Gastrocnemius medialis (tissue), 4 donors: ENCODE measurements at regions of chr20 and their contacts with region 1.

Region 1: DNA sequence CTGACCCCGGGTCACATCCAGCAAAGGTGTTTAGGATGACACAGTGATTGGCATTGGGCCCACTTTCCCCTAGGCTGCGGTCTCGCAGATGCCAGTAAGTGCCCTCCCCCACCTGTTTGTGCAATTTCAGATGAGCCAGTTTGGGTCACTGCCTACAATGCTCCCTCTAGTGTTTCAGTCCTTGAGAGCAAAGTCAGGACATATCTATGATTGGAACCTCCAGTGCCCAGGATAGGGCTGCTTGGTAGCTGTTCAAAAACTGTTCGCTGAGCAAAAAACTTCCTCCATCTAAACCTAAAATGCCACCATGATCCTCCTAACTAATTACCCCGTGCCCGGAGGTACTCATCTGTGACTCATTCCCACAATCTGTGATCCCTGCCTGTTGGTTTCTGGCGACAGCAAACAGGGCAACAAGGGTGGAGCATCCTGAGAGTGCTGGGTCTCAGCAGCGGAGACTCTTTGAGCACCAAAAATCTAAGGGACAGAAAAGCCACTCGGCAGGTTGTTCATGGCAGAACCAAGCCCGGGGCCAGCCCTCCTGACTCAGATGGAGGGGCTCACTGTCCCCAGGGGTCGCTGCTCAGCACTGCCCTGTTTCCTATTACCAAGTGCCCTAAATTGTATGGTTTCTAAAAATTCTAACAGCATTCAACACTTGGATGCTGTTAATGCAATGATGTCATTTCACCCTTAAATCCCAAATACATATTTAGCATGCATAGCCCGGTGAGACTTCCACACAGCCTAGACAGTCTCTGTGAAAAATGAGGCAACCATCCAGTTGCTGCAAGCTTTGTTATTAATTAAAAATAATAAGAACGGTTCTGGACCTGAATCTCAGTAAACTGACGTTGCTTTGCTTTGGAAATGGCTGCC is 5.0 kb downstream of the VSX1 start:
- DNase-seq: peak in 1 of 2 donors; percentile 57
- ATAC-seq: peak; percentile 76 to 77
- H3K4me3 ChIP-seq: peak overlapping the region; percentile 41 to 52 (median 48)
- H3K27ac ChIP-seq: peak overlapping the region; percentile 56 to 70 (median 62)
- H3K4me1 ChIP-seq: peaks cover 16 to 19% of the 10 kb centered on the region in 2 donors
- H3K27me3 ChIP-seq: peaks cover 13 to 25% (median 23%) of the 10 kb centered on the region in 3 donors
- CTCF ChIP-seq: peak in 3 of 5 experiments; percentile 16 to 44 (median 22)
- POLR2A ChIP-seq: no peak

Region 2: GRCh38 chr20:25005220-25005619 is 71.8 kb before region 1 on chr20:
- in situ Hi-C with region 1: no loop called
- intact Hi-C with region 1: no loop called
- DNase-seq: no peak
- ATAC-seq: no peak
- H3K4me3 ChIP-seq: no peak overlapping the region
- H3K27ac ChIP-seq: no peak overlapping the region
- H3K4me1 ChIP-seq: peaks cover 5 to 12% of the 10 kb centered on the region in 2 donors
- H3K27me3 ChIP-seq: no peaks in the 10 kb centered on the region
- CTCF ChIP-seq: no peak
- POLR2A ChIP-seq: no peak

Region 3: DNA sequence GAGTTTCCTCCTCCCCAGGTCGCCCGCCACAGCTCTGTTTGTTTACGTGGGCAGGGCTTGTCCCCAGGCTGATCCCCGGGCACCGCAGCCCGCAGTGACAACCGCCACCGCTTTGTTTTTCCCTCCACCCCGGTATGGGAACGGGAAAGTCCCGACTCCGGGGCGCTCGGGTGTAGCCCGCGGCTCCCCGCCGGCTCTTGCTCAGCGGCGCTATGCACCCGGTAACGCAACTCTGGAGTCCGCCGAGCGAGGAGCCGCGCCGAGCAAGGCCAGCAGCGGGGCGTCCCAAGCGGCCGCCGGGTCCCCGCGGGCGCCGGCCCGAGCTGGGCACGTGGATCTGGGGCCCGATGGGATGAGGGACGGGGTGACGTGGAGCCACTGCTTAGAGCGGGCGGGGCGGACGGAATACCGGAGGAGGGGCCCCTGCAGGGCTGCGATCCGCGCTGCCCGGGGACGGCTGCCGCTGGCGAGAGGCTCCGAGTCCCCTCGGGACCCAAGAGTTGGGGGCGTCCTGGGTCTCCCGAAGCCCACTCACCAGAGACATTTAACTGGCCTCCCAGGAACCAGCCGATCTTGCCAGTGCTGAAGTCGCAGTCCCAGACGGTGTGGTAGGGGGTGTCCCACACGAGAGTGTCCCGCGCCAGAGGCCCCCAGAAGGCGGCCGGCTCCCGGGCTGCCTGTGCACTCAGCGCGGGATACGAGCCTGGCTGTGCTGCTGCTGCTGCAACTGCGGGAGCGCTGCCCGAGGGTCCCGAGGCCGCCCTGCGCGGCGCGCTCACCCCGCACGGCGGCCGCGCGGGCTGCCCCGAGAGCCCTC is 19.5 kb before region 1 on chr20:
- in situ Hi-C with region 1: no loop called
- intact Hi-C with region 1: no loop called
- DNase-seq: peak; percentile 67 to 74
- ATAC-seq: peak; percentile 65 to 70
- H3K4me3 ChIP-seq: peak overlapping the region; percentile 72 to 93 (median 80)
- H3K27ac ChIP-seq: peak overlapping the region; percentile 87 to 95 (median 94)
- H3K4me1 ChIP-seq: peaks cover 44 to 55% of the 10 kb centered on the region in 2 donors
- H3K27me3 ChIP-seq: no peaks in the 10 kb centered on the region
- CTCF ChIP-seq: peak in 1 of 5 experiments; percentile 5
- POLR2A ChIP-seq: peak; percentile 89 to 92

Region 4: DNA sequence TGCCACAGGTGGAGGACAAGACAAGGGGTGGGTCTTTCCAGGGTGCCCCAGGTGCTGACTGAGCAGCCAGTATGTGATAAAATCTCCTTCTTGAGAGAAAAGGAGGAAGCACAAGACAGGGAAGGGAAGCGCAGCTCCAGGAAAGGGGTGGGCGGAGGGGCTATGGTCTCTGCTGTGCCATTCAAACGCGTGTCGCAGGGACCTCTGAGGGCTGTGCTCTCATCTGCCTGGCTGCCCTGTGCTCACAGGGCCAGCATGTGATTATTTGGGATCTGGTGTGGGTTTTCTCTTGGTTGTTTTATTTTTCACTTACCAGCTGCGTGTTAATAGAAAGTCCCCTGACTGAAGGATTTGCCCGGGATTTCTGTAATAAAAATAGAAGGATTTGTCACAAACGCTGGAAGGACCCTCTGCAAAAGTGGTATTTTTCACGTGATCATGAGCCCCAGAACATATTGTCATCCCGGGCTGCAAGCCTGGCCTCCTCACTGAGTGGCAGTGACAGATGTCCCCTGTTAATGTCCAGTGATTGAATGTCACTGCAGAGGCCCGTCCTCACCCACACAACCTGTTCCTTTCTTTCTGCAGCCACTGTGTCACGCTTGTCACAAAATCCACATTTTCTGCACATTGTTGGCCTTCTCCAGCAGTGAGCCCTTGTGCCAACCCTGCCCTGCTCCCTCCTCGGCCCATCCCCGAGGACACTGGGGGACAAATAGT is 39.9 kb after region 1 on chr20:
- in situ Hi-C with region 1: no loop called
- intact Hi-C with region 1: loop called (anchors 2 kb)
- DNase-seq: peak; percentile 63 to 78
- ATAC-seq: peak; percentile 92 to 96
- H3K4me3 ChIP-seq: no peak overlapping the region
- H3K27ac ChIP-seq: peak overlapping the region; percentile 67 to 89 (median 81)
- H3K4me1 ChIP-seq: peaks cover 20 to 22% of the 10 kb centered on the region in 2 donors
- H3K27me3 ChIP-seq: no peaks in the 10 kb centered on the region
- CTCF ChIP-seq: peak in 1 of 5 experiments; percentile 13
- POLR2A ChIP-seq: no peak

Region 5: DNA sequence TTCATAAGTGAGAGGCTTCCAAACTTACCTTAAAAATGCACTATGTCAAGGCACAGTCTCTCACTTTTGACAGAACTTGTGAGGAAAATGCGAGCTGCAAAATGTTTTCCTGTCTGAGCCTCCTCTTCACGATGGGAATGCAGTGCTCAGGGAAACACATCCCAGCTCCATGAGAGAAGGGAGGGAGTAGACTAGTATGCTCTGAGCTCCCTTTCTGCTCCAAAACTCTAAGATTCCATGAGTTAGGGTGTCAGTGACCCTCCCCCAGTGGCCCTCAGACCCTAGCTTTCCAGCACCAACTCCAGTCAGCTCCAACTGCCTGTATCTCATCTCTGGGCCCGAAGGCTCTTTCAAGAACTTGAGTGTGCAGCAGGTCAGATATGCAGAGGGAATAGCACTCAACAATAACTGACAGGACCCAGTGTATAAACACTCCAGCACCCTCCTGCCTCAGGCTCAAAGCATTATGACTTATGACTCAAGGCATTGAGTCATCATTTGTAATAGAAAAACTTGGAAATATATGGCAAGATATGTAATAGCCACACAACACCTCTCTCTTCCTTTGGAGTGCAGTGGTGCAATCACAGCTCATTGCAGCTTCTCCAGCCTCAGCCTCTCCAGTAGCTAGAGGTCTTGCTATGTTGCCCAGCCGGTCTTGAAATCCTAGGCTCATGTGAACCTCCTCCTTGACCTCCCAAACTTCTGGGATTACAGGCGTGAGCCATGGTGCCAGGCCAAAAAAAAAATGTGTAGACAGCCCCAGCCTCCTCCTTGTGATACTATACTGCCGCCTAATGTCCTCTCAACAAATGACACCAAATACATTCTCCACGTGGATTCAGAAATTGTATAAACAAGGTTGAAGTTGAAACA is 101.8 kb after region 1 on chr20:
- in situ Hi-C with region 1: loop called (anchors 10 to 25 kb)
- intact Hi-C with region 1: loop called (anchors 2 kb)
- DNase-seq: peak; percentile 30 to 82
- ATAC-seq: peak; percentile 94 to 96
- H3K4me3 ChIP-seq: no peak overlapping the region
- H3K27ac ChIP-seq: peak overlapping the region; percentile 39 to 63 (median 50)
- H3K4me1 ChIP-seq: no peaks in the 10 kb centered on the region
- H3K27me3 ChIP-seq: no peaks in the 10 kb centered on the region
- CTCF ChIP-seq: peak; percentile 62 to 84 (median 73)
- POLR2A ChIP-seq: no peak